AG04450 (cell line): ENCODE measurements at regions of chr21 and their contacts with region 1.

Region 1: GRCh38 chr21:29360799-29361765 is 62.4 kb downstream of the BACH1 start:
- DNase-seq: no peak
- H3K4me3 ChIP-seq: no peak overlapping the region
- H3K27ac ChIP-seq: no peak overlapping the region
- H3K27me3 ChIP-seq: no peaks in the 10 kb centered on the region
- CTCF ChIP-seq: peak; percentile 15; the same call in 1 of the 2 replicates

Region 2: DNA sequence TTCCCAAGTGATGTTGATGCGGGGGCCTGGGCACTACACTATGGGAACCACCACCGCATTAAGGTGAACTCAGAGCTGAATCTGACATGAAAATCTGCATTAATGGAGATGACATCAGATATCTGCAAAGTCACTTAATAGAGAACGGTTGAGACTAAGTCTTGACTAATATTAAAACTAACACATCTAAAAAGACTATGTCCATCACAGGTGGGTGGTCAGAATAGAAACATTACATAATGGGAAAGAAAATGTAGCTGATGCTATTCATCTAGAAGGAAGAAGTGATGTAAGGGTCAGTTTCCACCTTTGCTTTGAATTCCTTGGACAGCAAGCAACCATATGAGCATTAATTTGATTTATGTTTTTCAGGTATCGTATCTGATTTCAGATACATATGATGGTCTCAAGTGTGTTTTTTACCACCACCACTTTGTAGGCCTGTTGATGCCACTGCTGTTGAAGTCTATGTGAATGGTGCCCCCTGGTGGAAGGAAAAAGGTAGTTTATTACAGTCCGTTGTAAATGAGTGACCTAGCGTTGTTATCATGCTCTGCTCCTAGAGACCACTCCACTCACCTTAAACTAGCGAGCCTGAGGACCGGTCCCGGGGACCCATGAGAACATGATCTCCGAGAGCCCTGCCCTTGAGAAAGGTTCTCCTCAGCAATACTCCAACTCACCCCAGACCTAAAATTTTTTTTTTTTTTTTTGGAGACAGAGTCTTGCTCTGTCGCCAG is 11.2 kb after region 1 on chr21:
- CTCF ChIA-PET with region 1: interaction called, 16 read pairs
- POLR2A ChIA-PET with region 1: no interaction called
- DNase-seq: peak; percentile 66
- H3K4me3 ChIP-seq: no peak overlapping the region
- H3K27ac ChIP-seq: no peak overlapping the region
- H3K27me3 ChIP-seq: no peaks in the 10 kb centered on the region
- CTCF ChIP-seq: peak; percentile 70

Region 3: DNA sequence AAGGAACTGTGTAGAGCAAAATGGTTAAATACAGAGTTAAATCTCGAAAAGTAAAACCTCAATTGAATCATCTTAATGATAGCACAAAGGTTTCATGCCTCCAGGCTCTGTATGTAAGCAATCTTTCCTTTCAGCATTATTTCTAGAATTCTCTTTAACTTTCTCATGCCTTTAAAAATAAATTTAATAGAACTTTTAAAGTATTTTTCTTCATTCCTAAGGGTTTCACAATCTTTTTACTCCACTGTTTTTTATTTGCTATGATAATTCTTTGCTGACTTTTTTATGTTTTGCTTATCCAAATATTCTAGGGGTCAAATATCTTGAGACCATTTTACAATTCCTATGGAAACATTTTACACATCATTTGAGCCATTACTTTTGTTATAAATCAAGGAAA is 225.6 kb after region 1 on chr21:
- CTCF ChIA-PET with region 1: no interaction called
- POLR2A ChIA-PET with region 1: no interaction called
- DNase-seq: no peak
- H3K4me3 ChIP-seq: no peak overlapping the region
- H3K27ac ChIP-seq: no peak overlapping the region
- H3K27me3 ChIP-seq: no peaks in the 10 kb centered on the region
- CTCF ChIP-seq: no peak